Dorsolateral prefrontal cortex (tissue), 120 donors: ENCODE measurements at regions of chr10 and their contacts with region 1.

Region 1: DNA sequence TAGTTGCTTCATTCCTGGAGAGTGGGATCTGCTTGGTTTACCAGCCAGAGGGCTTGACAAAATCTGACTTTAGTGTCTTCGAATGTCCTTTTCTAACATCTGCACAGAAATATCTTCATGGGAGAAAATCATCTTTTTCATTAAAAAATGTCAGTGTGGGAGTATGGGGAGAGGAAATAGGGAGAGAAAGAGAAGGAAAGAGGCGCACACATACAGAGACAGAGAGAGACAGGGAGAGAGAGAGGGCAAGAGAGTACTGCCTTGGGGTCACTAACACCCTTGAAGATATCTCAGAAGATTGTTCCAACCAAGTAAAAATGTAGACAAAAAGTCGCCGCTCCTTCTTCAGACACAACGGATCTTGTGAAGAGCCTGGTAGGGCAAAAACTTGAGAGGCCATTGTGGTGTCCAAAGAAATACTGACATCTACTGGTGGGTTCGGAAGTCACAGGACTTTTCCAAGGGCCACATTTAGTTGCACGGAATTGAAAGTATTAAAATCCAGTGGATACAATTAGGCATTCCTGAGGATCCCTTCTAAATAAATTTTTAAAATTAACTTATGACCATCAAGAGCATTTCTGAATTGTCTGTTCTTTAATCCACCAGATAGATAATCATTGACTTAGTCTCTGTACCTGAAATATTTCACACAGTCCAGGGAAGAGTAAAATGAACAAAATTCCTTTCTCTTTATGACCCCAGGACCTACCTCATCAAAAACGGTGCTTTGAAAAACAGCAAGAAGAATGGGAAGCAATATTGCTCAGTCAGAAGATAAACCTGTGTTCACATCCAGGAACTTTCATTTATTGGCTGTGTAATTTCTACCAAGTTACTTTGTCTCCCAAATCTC is 29.7 kb downstream of the VIM start:
- DNase-seq: peak in 5 of 10 donors; percentile 18 to 42 (median 31)
- H3K4me3 ChIP-seq: peak overlapping the region in 9 of 59 donors; percentile 8 to 31 (median 25)
- H3K27ac ChIP-seq: no peak overlapping the region
- H3K27me3 ChIP-seq: peaks cover 0 to 11% (median 0%) of the 10 kb centered on the region in 45 donors
- CTCF ChIP-seq: peak; percentile 71 to 98 (median 87)

Region 2: DNA sequence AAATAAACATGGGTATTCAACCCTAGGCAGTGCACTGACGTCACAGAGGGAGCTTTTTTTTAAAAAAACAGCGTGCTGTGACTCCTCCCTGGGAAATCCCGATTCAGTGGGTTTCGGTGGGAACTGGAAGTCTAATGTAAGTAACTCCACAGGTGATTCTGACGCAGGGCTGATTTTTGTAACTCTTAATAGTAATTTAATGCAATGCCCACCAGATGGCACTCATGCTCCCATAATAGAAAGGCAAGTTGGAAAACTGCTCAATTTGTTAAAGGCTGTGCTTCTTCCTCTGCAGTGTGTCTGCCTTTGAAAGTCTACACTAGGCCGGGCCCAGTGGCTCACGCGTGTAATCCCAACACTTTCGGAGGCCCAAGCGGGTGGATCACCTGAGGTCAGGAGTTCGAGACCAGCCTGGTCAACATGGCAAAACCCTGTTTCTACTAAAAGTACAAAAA is 429.6 kb before region 1 on chr10:
- intact Hi-C with region 1: loop called (anchors 5 kb)
- DNase-seq: peak in 3 of 10 donors; percentile 24 to 58 (median 30)
- H3K4me3 ChIP-seq: peak overlapping the region in 29 of 59 donors; percentile 1 to 48 (median 21)
- H3K27ac ChIP-seq: peak overlapping the region in 5 of 59 donors; percentile 0 to 66 (median 20)
- H3K27me3 ChIP-seq: no peaks in the 10 kb centered on the region
- CTCF ChIP-seq: peak; percentile 47 to 87 (median 74)

Region 3: GRCh38 chr10:16843252-16843870 is 414.3 kb before region 1 on chr10:
- intact Hi-C with region 1: loop called (anchors 2 to 5 kb)
- DNase-seq: no peak
- H3K4me3 ChIP-seq: no peak overlapping the region
- H3K27ac ChIP-seq: peak overlapping the region in 1 of 59 donors; percentile 6
- H3K27me3 ChIP-seq: no peaks in the 10 kb centered on the region
- CTCF ChIP-seq: peak; percentile 70 to 93 (median 84)

Region 4: DNA sequence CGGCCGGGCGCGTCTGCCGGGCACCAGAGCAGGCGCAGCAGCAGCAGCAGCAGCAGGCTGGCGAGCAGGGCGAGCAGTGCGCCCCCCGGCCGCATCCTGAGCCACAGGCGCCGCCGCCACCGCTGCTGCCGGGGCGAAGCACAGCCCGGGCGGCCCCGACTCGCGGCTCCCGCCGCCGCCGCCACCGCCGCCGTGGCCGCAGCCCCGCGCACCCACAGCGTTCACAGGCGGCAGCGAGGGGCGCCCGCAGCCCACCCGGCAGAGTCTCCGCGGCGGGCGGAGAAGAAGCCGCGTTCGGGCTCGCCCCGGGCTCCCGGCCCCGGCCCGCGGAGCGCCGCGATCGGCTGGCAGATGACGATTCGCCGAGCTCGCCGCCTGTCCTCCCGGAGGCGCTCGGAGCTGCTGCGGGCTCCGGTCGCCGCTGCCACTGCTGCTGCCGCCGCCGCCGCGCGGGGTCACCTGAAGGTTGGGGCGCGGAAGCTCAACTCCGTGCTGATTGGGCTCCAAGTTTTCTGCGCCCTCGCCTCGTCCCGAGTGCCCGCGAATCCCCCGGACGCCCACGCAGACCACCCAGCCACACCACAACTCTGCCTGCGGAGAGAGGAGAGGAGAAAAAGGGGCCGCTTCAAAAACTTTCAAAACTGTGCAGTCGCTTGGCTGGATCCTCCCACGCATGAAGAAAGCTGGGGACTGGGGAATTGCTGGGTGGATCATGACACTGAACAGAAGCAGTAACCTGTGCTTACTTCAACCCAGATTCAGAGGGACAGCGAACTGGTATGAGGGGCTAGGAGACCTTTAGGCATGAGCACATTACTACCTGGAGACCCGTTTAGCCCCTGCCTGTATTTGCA is 196.7 kb after region 1 on chr10 and contains the start of gene ST8SIA6:
- intact Hi-C with region 1: no loop called
- DNase-seq: peak in 3 of 10 donors; percentile 12 to 45 (median 35)
- H3K4me3 ChIP-seq: peak within 1 kb of the TSS; percentile 6 to 65 (median 49)
- H3K27ac ChIP-seq: peak within 1 kb of the TSS in 41 of 59 donors; percentile 5 to 80 (median 57)
- H3K27me3 ChIP-seq: peaks cover 0 to 52% (median 13%) of the 10 kb centered on the region in 45 donors
- CTCF ChIP-seq: no peak
- total RNA-seq, gene ST8SIA6: 0.63 to 7.4 (median 3.4) TPM